WTC11 (cell line): ENCODE measurements at regions of chr11 and their contacts with region 1.

Region 1: GRCh38 chr11:65637794-65638317 is at the start of gene SIPA1:
- DNase-seq: peak; percentile 89
- ATAC-seq: peak; percentile 70
- H3K4me3 Mint-ChIP-seq: peak within 1 kb of the TSS; percentile 81
- H3K27ac Mint-ChIP-seq: peak within 1 kb of the TSS; percentile 94
- H3K4me1 Mint-ChIP-seq: peaks cover 22% of the 10 kb centered on the region
- H3K27me3 Mint-ChIP-seq: no peaks in the 10 kb centered on the region
- CTCF ChIP-seq: no peak
- total RNA-seq, gene SIPA1: 63.3 to 71.7 TPM (median 65.4 TPM) in 3 replicates

Region 2: GRCh38 chr11:65615229-65615941 is 22.5 kb before region 1 on chr11 and contains the start of gene PCNX3:
- CTCF ChIA-PET with region 1: interaction called, 21 read pairs
- POLR2A ChIA-PET with region 1: interaction called, 6 read pairs
- DNase-seq: peak; percentile 100
- ATAC-seq: peak; percentile 91
- H3K4me3 Mint-ChIP-seq: peak within 1 kb of the TSS; percentile 94
- H3K27ac Mint-ChIP-seq: peak within 1 kb of the TSS; percentile 98
- H3K4me1 Mint-ChIP-seq: peaks cover 21% of the 10 kb centered on the region
- H3K27me3 Mint-ChIP-seq: no peaks in the 10 kb centered on the region; the same call in 1 of the 2 replicates
- CTCF ChIP-seq: no peak
- total RNA-seq, gene PCNX3: 44.6 to 51.6 TPM (median 45.8 TPM) in 3 replicates

Region 3: DNA sequence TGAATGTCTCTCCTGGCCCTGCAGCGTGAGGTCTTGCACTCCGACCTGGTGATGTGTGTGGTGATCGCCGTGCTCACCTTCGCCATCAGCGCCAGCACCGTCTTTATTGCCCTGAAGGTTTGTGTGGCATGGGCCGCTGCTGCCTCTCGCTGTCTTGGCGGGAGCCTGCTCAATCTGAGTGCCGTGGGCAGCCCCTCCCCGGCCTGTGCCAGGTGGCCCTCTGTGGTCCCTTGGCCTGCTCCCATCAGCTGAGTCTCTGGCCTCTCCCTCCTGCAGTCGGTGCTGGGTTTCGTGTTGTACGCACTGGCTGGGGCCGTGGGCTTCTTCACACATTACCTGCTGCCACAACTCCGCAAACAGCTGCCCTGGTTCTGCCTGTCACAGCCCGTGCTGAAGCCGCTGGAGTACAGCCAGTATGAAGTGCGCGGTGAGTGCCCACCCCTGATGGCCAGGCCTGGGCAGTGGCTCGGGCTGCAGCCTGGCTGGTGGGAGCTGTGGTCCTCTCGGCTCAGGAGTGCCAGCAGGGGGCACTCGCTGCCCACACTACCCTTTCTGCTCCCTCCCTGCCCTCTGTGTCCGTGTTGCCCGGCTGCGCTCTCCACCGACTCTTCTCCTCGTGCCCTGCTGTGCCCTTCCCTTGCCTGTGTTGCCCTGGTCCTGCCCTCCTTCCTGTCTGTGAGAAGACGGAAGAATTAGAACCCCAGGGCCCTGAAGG is 12.1 kb before region 1 on chr11:
- CTCF ChIA-PET with region 1: interaction called, 31 read pairs
- POLR2A ChIA-PET with region 1: no interaction called
- DNase-seq: peak; percentile 52
- ATAC-seq: peak; percentile 71
- H3K4me3 Mint-ChIP-seq: no peak overlapping the region
- H3K27ac Mint-ChIP-seq: no peak overlapping the region
- H3K4me1 Mint-ChIP-seq: no peaks in the 10 kb centered on the region
- H3K27me3 Mint-ChIP-seq: no peaks in the 10 kb centered on the region
- CTCF ChIP-seq: peak; percentile 28; the same call in 1 of the 2 replicates

Region 4: DNA sequence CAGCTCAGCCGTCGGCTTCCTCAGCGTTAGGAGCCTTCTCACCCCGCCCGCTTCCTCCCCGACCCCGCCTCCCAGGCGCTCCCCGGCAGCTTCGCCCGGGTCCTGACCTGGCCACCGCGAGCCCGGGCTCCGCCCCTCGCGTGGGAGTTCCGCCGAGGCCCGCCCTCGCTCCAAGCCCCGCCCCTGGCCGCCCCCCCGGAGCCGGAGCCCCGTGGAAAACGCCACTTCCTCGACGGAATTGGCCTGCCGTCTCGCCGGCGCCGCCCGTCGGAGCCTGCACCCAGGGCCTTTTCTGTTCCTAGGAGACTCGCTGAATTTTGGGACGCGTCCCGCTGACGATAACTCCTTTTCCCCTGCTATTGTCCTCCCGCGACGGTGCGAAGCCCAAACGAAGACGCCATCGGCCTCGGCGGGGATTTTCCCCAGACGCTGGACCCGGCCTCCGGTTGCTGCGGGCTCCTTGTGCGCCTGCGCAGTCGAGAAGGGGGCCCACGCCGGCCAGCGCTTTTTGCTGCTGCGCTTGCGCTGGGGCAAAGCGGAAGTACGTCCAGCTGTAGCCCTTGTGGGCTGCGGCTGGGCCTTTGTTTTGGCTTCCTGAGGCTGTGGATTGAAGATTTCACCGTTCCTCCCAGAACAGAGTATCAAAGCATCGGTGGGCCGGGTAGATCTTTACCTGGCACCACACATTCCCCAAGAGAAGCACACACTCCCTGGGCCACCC is 14.8 kb after region 1 on chr11:
- CTCF ChIA-PET with region 1: interaction called, 36 read pairs
- POLR2A ChIA-PET with region 1: interaction called, 20 read pairs
- DNase-seq: peak; percentile 90
- ATAC-seq: peak; percentile 84
- H3K4me3 Mint-ChIP-seq: peak overlapping the region; percentile 80
- H3K27ac Mint-ChIP-seq: peak overlapping the region; percentile 96
- H3K4me1 Mint-ChIP-seq: peaks cover 21% of the 10 kb centered on the region
- H3K27me3 Mint-ChIP-seq: peaks cover 3% of the 10 kb centered on the region; the same call in 1 of the 2 replicates
- CTCF ChIP-seq: no peak

Region 5: GRCh38 chr11:65662799-65663638 is 25.2 kb after region 1 on chr11 and contains the start of gene RELA:
- CTCF ChIA-PET with region 1: interaction called, 13 read pairs
- POLR2A ChIA-PET with region 1: interaction called, 12 read pairs
- DNase-seq: peak; percentile 93
- ATAC-seq: peak; percentile 87
- H3K4me3 Mint-ChIP-seq: peak within 1 kb of the TSS; percentile 86
- H3K27ac Mint-ChIP-seq: peak within 1 kb of the TSS; percentile 49
- H3K4me1 Mint-ChIP-seq: peaks cover 4% of the 10 kb centered on the region
- H3K27me3 Mint-ChIP-seq: no peaks in the 10 kb centered on the region; the same call in 1 of the 2 replicates
- CTCF ChIP-seq: no peak
- total RNA-seq, gene RELA: 26.3 to 35.1 TPM (median 29.0 TPM) in 3 replicates

Region 6: GRCh38 chr11:65850831-65851811 is 213.3 kb after region 1 on chr11:
- CTCF ChIA-PET with region 1: interaction called, 10 read pairs
- POLR2A ChIA-PET with region 1: no interaction called
- DNase-seq: peak; percentile 63
- ATAC-seq: peak; percentile 65
- H3K4me3 Mint-ChIP-seq: no peak overlapping the region
- H3K27ac Mint-ChIP-seq: peak overlapping the region; percentile 41; the same call in 1 of the 2 replicates
- H3K4me1 Mint-ChIP-seq: peaks cover 17% of the 10 kb centered on the region
- H3K27me3 Mint-ChIP-seq: peaks cover 10% of the 10 kb centered on the region
- CTCF ChIP-seq: peak; percentile 69